IMR-90 (cell line): ENCODE measurements at regions of chr3 and their contacts with region 1.

Region 1: DNA sequence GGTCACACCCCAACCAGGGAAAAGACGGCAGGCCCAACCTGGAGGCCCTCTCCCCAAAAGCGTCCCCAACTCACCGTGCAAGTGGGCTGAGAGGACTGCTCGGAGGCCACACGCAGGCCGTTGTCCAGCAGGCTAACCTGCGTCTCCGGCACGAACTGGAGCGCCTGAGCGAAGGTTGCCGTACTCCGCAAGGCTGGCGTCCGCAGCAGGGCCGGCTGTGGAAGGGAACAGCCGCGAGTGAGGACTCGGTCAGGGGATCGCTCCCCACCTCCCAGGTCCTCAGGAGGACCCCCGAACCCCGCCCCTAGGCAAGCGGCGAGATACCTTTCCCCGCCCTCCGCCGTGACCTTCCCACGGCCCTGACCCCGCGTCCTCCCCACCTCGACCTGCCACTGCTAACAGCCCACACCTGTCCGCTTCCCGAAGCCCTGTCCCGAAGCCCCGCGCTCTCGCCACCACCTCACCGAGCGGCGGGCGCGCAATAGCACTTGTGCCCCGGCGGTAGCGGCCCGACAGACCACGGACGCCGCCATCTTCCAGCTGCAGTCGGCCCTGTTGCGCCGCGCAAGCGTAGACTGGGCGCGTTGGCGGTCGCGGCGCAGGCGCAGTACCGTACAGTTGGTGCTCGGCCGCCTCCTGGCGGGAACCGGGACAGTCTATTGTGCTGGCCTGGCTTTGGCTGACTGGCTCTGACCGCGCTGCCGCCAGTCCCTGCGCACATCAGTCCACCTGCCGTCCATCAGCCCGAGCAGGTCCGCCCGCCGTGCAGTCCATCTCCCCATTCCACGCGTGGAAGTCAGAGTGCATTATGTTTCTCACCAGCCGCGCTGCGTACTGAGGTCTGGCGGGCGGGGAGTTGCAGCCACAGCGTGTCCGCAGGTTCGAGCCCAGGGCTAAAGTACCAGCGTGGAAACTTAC is at the start of gene UQCRC1:
- DNase-seq: peak; percentile 90
- ATAC-seq: peak; percentile 95
- H3K4me3 ChIP-seq: peak within 1 kb of the TSS; percentile 90
- H3K27ac ChIP-seq: peak within 1 kb of the TSS; percentile 93
- H3K4me1 ChIP-seq: peaks cover 18% of the 10 kb centered on the region
- H3K27me3 ChIP-seq: no peaks in the 10 kb centered on the region
- CTCF ChIP-seq: peak; percentile 83
- POLR2A ChIP-seq: peak; percentile 81
- RAD21 ChIP-seq: peak; percentile 59
- total RNA-seq, gene UQCRC1: 952 and 1,365 TPM in 2 replicates

Region 2: DNA sequence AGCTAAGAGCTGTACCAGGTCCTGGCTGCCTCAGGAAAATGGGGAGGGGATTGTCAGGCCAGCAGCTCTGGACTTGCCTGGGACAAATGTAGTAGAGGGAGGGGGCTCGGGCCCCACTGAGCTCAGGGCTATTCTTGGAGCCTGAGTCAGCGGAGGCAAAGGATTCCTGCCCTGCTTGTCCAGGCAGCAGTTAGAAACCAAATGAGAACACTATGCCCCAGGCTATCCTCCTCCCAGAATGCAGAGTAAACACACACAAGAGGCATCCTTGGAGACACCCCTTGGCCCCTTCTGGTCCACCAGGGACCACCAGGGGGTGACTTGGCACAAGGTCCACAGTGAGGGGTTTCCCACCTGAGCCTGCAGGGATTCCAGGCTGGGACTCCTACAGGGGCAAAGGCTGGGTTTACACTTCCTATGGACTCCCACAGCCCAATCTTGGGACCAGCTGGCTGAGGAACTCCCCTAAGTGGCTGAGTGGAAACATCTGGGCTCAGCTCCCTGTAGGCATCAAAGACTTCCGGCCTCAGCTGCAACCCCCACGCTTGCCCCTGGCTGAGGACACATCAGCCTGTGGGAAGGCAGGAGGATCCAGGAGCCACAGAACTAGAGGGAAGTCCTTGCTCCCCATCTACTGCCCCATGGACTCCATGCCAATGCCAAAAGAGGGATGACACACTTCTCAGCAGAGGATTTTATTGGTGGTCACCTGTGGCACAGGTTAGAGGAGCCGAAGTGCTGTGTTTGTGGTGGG is 10.8 kb before region 1 on chr3:
- CTCF ChIA-PET with region 1: interaction called, 4 read pairs
- POLR2A ChIA-PET with region 1: interaction called, 12 read pairs
- dilution Hi-C with region 1: no loop called
- in situ Hi-C with region 1: no loop called
- intact Hi-C with region 1: no loop called
- DNase-seq: peak; percentile 94
- ATAC-seq: peak; percentile 70
- H3K4me3 ChIP-seq: no peak overlapping the region
- H3K27ac ChIP-seq: peak overlapping the region; percentile 94
- H3K4me1 ChIP-seq: peaks cover 54% of the 10 kb centered on the region
- H3K27me3 ChIP-seq: no peaks in the 10 kb centered on the region
- CTCF ChIP-seq: no peak; the same call in 1 of the 2 replicates
- POLR2A ChIP-seq: no peak
- RAD21 ChIP-seq: no peak; the same call in 1 of the 2 replicates

Region 3: GRCh38 chr3:48656061-48656840 is 46.9 kb after region 1 on chr3:
- CTCF ChIA-PET with region 1: no interaction called
- POLR2A ChIA-PET with region 1: no interaction called
- dilution Hi-C with region 1: no loop called
- in situ Hi-C with region 1: no loop called
- intact Hi-C with region 1: loop called (anchors 2 kb)
- DNase-seq: peak; percentile 62
- ATAC-seq: peak; percentile 93
- H3K4me3 ChIP-seq: peak overlapping the region; percentile 51
- H3K27ac ChIP-seq: peak overlapping the region; percentile 17; the same call in 1 of the 2 replicates
- H3K4me1 ChIP-seq: peaks cover 3% of the 10 kb centered on the region; the same call in 1 of the 2 replicates
- H3K27me3 ChIP-seq: no peaks in the 10 kb centered on the region; the same call in 1 of the 2 replicates
- CTCF ChIP-seq: peak; percentile 72
- POLR2A ChIP-seq: no peak
- RAD21 ChIP-seq: peak; percentile 56

Region 4: DNA sequence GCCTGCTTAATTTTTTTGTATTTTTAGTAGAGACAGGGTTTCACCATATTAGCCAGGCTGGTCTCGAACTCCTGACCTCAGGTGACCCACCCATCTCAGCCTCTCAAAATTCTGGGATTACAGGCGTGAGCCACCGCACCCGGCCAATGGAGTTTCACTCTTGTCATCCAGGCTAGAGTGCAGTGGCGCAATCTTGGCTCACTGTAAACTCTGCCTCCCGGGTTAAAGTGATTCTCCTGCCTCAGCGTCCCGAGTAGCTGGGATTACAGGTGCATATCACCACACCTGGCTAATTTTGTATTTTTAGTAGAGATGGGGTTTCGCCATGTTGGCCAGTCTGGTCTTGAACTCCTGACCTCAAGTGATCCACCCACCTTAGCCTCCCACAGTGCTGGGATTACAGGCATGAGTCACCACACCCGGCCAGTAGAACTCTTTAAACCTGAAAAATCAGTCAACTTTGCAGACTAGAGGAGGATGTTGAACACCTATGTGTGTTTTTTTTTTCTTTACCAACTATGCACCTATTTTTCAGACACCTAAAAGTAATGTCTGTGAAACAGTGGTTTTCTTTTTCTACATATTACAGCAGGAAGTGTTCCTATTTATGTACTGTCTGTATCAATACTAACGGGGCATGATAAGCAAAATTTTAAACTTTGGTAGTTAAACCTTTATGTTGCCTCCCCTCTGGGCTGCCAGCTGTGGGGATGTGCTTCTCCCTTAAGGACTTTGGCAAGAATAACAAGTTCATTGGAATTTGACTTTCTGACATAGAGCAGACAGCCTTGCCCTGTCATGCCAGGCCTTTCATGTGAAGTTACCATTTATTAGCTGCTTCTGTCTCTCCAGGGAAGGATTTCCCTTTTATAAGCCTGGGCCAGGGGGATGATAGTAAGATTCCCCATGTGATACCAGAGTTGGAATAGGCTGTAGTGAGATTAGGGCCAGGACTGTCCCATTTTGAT is 317.4 kb after region 1 on chr3:
- CTCF ChIA-PET with region 1: no interaction called
- POLR2A ChIA-PET with region 1: interaction called, 11 read pairs
- dilution Hi-C with region 1: no loop called
- in situ Hi-C with region 1: no loop called
- intact Hi-C with region 1: no loop called
- DNase-seq: no peak
- ATAC-seq: peak; percentile 75
- H3K4me3 ChIP-seq: no peak overlapping the region
- H3K27ac ChIP-seq: no peak overlapping the region
- H3K4me1 ChIP-seq: peaks cover 6% of the 10 kb centered on the region
- H3K27me3 ChIP-seq: no peaks in the 10 kb centered on the region
- CTCF ChIP-seq: no peak
- POLR2A ChIP-seq: no peak
- RAD21 ChIP-seq: no peak

Region 5: DNA sequence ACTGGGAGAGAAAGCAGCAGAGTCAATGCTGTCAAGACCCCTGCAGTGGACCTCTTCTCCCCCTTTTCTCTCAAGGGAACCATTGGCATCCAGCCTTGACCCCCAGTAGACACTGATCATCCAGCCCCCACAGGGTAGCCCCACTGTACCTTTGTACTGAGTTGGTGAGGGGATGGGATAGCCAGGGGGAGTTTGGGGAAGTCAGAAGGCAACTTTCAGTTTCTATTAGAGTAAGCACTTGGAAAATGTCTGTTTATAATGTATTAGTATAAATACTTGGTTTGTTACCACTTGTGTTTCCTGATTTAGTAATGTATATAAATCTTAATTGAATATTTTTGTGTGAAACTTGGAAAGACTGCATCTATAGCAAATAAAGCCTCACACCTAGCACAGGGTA is 885.7 kb after region 1 on chr3:
- CTCF ChIA-PET with region 1: no interaction called
- POLR2A ChIA-PET with region 1: no interaction called
- dilution Hi-C with region 1: no loop called
- in situ Hi-C with region 1: no loop called
- intact Hi-C with region 1: no loop called
- DNase-seq: no peak
- ATAC-seq: no peak
- H3K4me3 ChIP-seq: no peak overlapping the region
- H3K27ac ChIP-seq: no peak overlapping the region
- H3K4me1 ChIP-seq: peaks cover 16% of the 10 kb centered on the region
- H3K27me3 ChIP-seq: no peaks in the 10 kb centered on the region
- CTCF ChIP-seq: no peak
- POLR2A ChIP-seq: no peak
- RAD21 ChIP-seq: no peak